ENCODE measurements at regions of chr10 and their contacts with region 1.

Region 1: GRCh38 chr10:91908337-91909116 is 759 bp downstream of the FGFBP3 start:
- DNase-seq: peak; percentile 56 to 89 (median 62)
- ATAC-seq: peak; percentile 85
- H3K4me3 ChIP-seq: peak overlapping the region; percentile 64
- H3K4me3 Mint-ChIP-seq: peak overlapping the region; percentile 89
- H3K27ac ChIP-seq: peak overlapping the region in 1 of 2 donors; percentile 24
- H3K27ac Mint-ChIP-seq: peak overlapping the region; percentile 86
- H3K4me1 ChIP-seq: peaks cover 18% of the 10 kb centered on the region
- H3K4me1 Mint-ChIP-seq: peaks cover 28% of the 10 kb centered on the region
- H3K27me3 ChIP-seq: no peaks in the 10 kb centered on the region
- H3K27me3 Mint-ChIP-seq: peaks cover 7% of the 10 kb centered on the region
- CTCF ChIP-seq: peak; percentile 55

Region 2: GRCh38 chr10:91298224-91298871 is 610.2 kb before region 1 on chr10:
- CTCF ChIA-PET with region 1: interaction called, 6 read pairs
- POLR2A ChIA-PET with region 1: interaction called, 7 read pairs
- intact Hi-C with region 1: loop called (anchors 2 kb)
- DNase-seq: peak; percentile 64 to 90 (median 72)
- ATAC-seq: peak; percentile 99
- H3K4me3 ChIP-seq: peak overlapping the region; percentile 54
- H3K4me3 Mint-ChIP-seq: peak overlapping the region; percentile 75
- H3K27ac ChIP-seq: no peak overlapping the region
- H3K27ac Mint-ChIP-seq: no peak overlapping the region
- H3K4me1 ChIP-seq: peaks cover 11% of the 10 kb centered on the region
- H3K4me1 Mint-ChIP-seq: peaks cover 10% of the 10 kb centered on the region
- H3K27me3 ChIP-seq: no peaks in the 10 kb centered on the region
- H3K27me3 Mint-ChIP-seq: peaks cover 7% of the 10 kb centered on the region
- CTCF ChIP-seq: peak; percentile 88

Region 3: GRCh38 chr10:91409869-91410637 is 498.5 kb before region 1 on chr10 and contains the start of gene HECTD2:
- CTCF ChIA-PET with region 1: no interaction called
- POLR2A ChIA-PET with region 1: interaction called, 7 read pairs
- intact Hi-C with region 1: loop called in 1 of 2 experiments (anchors 5 kb)
- DNase-seq: peak; percentile 61 to 94 (median 82)
- ATAC-seq: peak; percentile 85
- H3K4me3 ChIP-seq: peak within 1 kb of the TSS; percentile 92
- H3K4me3 Mint-ChIP-seq: peak within 1 kb of the TSS; percentile 92
- H3K27ac ChIP-seq: peak within 1 kb of the TSS; percentile 82 to 86
- H3K27ac Mint-ChIP-seq: peak within 1 kb of the TSS; percentile 86
- H3K4me1 ChIP-seq: peaks cover 14% of the 10 kb centered on the region
- H3K4me1 Mint-ChIP-seq: peaks cover 11% of the 10 kb centered on the region
- H3K27me3 ChIP-seq: peaks cover 3 to 8% of the 10 kb centered on the region in 2 experiments
- H3K27me3 Mint-ChIP-seq: no peaks in the 10 kb centered on the region
- CTCF ChIP-seq: peak; percentile 19
- total RNA-seq, gene HECTD2: 0.92 to 1.0 TPM

Region 4: DNA sequence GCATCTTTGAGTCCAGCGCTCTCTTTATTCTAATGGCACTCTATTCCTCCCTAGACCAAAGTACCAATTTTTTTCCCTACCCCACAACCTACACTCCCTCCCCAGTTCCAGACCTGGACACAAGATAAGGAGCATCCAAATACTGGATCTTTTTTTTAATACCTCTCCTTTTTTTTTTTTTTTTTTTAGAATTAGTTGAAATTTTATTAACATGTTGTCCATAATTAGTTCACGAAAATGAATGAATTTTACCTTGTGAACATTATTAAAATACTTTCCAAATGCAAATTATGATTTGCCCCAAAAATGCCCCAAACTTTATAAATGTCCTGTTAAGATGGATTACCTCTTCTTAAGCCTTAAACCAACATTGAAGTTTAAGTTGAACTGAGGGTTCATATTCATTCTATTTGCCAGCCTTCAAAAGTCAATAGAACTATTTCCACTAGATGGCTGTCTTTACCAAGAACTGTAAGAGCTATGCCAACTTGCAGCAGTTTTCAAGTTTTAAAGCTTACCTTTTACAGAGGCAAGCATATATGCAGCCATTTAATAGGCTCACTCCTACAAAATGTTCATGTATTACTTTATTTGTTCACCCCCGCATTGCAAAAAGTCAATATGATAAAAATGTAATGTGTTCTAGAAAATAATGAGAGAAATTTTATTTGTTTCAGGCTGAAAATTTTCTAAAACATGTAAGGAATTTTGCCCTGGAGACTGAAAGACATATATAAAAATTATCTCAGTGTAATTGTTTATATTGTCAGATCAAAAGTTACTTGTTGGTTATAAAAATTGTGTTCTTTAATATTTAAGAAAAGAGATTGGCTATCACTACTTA is 150.0 kb before region 1 on chr10:
- CTCF ChIA-PET with region 1: interaction called, 12 read pairs
- POLR2A ChIA-PET with region 1: interaction called, 10 read pairs
- intact Hi-C with region 1: loop called (anchors 1 kb)
- DNase-seq: peak in 3 of 14 experiments; percentile 70 to 77 (median 73)
- ATAC-seq: peak; percentile 76
- H3K4me3 ChIP-seq: no peak overlapping the region
- H3K4me3 Mint-ChIP-seq: no peak overlapping the region
- H3K27ac ChIP-seq: no peak overlapping the region
- H3K27ac Mint-ChIP-seq: no peak overlapping the region
- H3K4me1 ChIP-seq: no peaks in the 10 kb centered on the region
- H3K4me1 Mint-ChIP-seq: no peaks in the 10 kb centered on the region
- H3K27me3 ChIP-seq: peaks cover 0 to 10% of the 10 kb centered on the region in 2 experiments
- H3K27me3 Mint-ChIP-seq: peaks cover 23% of the 10 kb centered on the region
- CTCF ChIP-seq: peak; percentile 77

Region 5: DNA sequence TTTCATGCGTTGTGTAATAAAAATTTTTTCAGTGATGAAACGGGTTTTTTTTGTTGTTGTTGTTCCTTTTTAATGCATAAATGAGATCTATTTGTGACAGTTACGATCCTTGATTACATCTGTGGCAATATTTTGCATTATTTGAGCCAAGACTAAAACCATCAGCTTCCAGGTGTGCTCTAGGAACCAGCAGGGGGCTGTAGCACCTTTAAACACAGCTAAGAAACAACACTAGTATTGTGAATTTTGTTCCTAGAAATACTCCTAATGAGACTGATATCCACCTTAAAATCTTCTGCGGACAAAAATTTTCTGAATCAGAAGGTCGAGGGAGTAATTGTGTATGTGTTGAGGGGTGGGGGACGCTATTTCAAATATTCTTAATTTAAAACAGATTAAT is 51.9 kb before region 1 on chr10:
- CTCF ChIA-PET with region 1: interaction called, 5 read pairs
- POLR2A ChIA-PET with region 1: interaction called, 4 read pairs
- intact Hi-C with region 1: loop called in 1 of 2 experiments (anchors 2 kb)
- DNase-seq: peak in 6 of 14 experiments; percentile 2 to 30 (median 14)
- ATAC-seq: no peak
- H3K4me3 ChIP-seq: no peak overlapping the region
- H3K4me3 Mint-ChIP-seq: no peak overlapping the region
- H3K27ac ChIP-seq: no peak overlapping the region
- H3K27ac Mint-ChIP-seq: no peak overlapping the region
- H3K4me1 ChIP-seq: no peaks in the 10 kb centered on the region
- H3K4me1 Mint-ChIP-seq: no peaks in the 10 kb centered on the region
- H3K27me3 ChIP-seq: no peaks in the 10 kb centered on the region
- H3K27me3 Mint-ChIP-seq: no peaks in the 10 kb centered on the region
- CTCF ChIP-seq: no peak

Region 6: GRCh38 chr10:92014620-92015019 is 106.1 kb after region 1 on chr10:
- CTCF ChIA-PET with region 1: no interaction called
- POLR2A ChIA-PET with region 1: no interaction called
- intact Hi-C with region 1: no loop called
- DNase-seq: no peak
- ATAC-seq: no peak
- H3K4me3 ChIP-seq: no peak overlapping the region
- H3K4me3 Mint-ChIP-seq: no peak overlapping the region
- H3K27ac ChIP-seq: no peak overlapping the region
- H3K27ac Mint-ChIP-seq: no peak overlapping the region
- H3K4me1 ChIP-seq: no peaks in the 10 kb centered on the region
- H3K4me1 Mint-ChIP-seq: no peaks in the 10 kb centered on the region
- H3K27me3 ChIP-seq: no peaks in the 10 kb centered on the region
- H3K27me3 Mint-ChIP-seq: no peaks in the 10 kb centered on the region
- CTCF ChIP-seq: no peak

Region 7: GRCh38 chr10:92290837-92291615 is 382.5 kb after region 1 on chr10 and contains the starts of genes CPEB3 and MARCHF5:
- CTCF ChIA-PET with region 1: no interaction called
- POLR2A ChIA-PET with region 1: interaction called, 7 read pairs
- intact Hi-C with region 1: loop called in 1 of 2 experiments (anchors 5 kb)
- DNase-seq: peak; percentile 80 to 97 (median 87)
- ATAC-seq: peak; percentile 97
- H3K4me3 ChIP-seq: peak within 1 kb of the TSS; percentile 97
- H3K4me3 Mint-ChIP-seq: peak within 1 kb of the TSS; percentile 97
- H3K27ac ChIP-seq: peak within 1 kb of the TSS; percentile 37 to 50
- H3K27ac Mint-ChIP-seq: peak within 1 kb of the TSS; percentile 87
- H3K4me1 ChIP-seq: peaks cover 29% of the 10 kb centered on the region
- H3K4me1 Mint-ChIP-seq: peaks cover 33% of the 10 kb centered on the region
- H3K27me3 ChIP-seq: no peaks in the 10 kb centered on the region
- H3K27me3 Mint-ChIP-seq: no peaks in the 10 kb centered on the region
- CTCF ChIP-seq: peak; percentile 44
- total RNA-seq, gene CPEB3: 1.2 to 1.3 TPM
- total RNA-seq, gene MARCHF5: 33.5 to 36.1 TPM

Region 8: GRCh38 chr10:93482145-93482834 is 1573.8 kb after region 1 on chr10 and contains the start of gene MYOF:
- CTCF ChIA-PET with region 1: no interaction called
- POLR2A ChIA-PET with region 1: no interaction called
- intact Hi-C with region 1: no loop called
- DNase-seq: peak in 11 of 14 experiments; percentile 12 to 82 (median 27)
- ATAC-seq: peak; percentile 96
- H3K4me3 ChIP-seq: peak within 1 kb of the TSS; percentile 57
- H3K4me3 Mint-ChIP-seq: peak within 1 kb of the TSS; percentile 84
- H3K27ac ChIP-seq: no peak within 1 kb of the TSS
- H3K27ac Mint-ChIP-seq: no peak within 1 kb of the TSS
- H3K4me1 ChIP-seq: peaks cover 11% of the 10 kb centered on the region
- H3K4me1 Mint-ChIP-seq: peaks cover 15% of the 10 kb centered on the region
- H3K27me3 ChIP-seq: peaks cover 12 to 13% of the 10 kb centered on the region in 2 experiments
- H3K27me3 Mint-ChIP-seq: peaks cover 48% of the 10 kb centered on the region
- CTCF ChIP-seq: peak; percentile 69
- total RNA-seq, gene MYOF: 0.14 to 0.27 TPM